Mammary epithelial cell (primary cell): ENCODE measurements at regions of chr15 and their contacts with region 1.

Region 1: GRCh38 chr15:82849556-82850512 is 40.4 kb downstream of the WHAMM start:
- DNase-seq: peak; percentile 42
- H3K4me3 ChIP-seq: no peak overlapping the region
- H3K27ac ChIP-seq: no peak overlapping the region
- H3K4me1 ChIP-seq: peaks cover under 1% of the 10 kb centered on the region
- H3K27me3 ChIP-seq: no peaks in the 10 kb centered on the region
- CTCF ChIP-seq: peak; percentile 50 to 66

Region 2: GRCh38 chr15:82882273-82882928 is 32.6 kb after region 1 on chr15:
- CTCF ChIA-PET with region 1: no interaction called
- dilution Hi-C with region 1: loop called (anchors 5 kb)
- in situ Hi-C with region 1: no loop called
- intact Hi-C with region 1: no loop called
- DNase-seq: no peak
- H3K4me3 ChIP-seq: no peak overlapping the region
- H3K27ac ChIP-seq: no peak overlapping the region
- H3K4me1 ChIP-seq: no peaks in the 10 kb centered on the region
- H3K27me3 ChIP-seq: no peaks in the 10 kb centered on the region
- CTCF ChIP-seq: no peak

Region 3: GRCh38 chr15:82936960-82937711 is 87.3 kb after region 1 on chr15:
- CTCF ChIA-PET with region 1: no interaction called
- dilution Hi-C with region 1: loop called (anchors 5 kb)
- in situ Hi-C with region 1: no loop called
- intact Hi-C with region 1: no loop called
- DNase-seq: peak; percentile 82
- H3K4me3 ChIP-seq: no peak overlapping the region
- H3K27ac ChIP-seq: no peak overlapping the region
- H3K4me1 ChIP-seq: peaks cover 13% of the 10 kb centered on the region
- H3K27me3 ChIP-seq: no peaks in the 10 kb centered on the region
- CTCF ChIP-seq: no peak